Activated CD8-positive, alpha-beta T cell treated with anti-CD3 and anti-CD28 coated beads, Interleukin-2, amount 10 ng/mL, durations not matched to agents 7 days and 5 days (primary cell): ENCODE measurements at regions of chr5 and their contacts with region 1.

Region 1: DNA sequence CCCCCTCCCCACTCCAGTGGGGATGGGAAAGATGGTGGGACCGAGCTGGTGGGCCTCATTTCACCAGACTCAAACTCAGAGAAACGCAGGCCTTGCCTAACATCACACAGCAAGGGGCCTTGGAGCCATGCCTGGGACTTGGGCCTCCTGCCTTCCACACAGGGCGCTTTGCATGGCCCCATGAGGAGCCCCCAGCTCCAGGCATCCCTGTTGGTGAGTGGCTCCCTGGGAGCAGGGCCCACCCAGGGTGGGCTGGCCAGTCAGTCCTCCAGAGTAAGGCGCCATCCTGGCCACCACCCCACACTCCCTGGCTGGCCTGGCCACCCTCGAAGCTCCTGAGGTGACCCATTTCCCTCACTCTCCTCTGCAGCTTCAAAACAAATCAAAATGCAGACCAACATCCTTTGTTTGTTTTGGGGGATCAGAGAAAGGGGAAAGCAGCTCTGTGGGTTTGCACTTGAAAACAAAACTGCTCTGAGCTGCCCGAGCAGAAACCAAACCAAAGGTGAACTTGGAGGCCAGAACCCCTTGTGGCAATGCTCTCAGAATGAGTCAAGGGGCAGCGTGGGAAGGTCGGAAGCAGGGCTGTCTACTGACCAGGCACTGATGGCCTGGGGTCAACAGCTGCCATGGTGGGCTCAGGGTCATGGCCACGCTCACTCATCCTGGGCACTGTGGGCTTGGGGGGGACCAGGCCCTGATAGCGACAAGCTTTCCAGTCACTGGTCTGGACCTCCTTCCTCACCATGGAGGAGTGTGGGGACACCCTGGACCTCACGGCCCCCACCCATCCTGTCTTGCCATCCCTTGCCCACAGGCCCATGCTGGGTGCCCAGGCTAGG is 37.0 kb upstream of the VDAC1 start:
- DNase-seq: peak; percentile 43
- ATAC-seq: peak; percentile 24
- H3K4me3 Mint-ChIP-seq: no peak overlapping the region
- H3K27ac Mint-ChIP-seq: peak overlapping the region; percentile 39
- H3K4me1 Mint-ChIP-seq: peaks cover 42% of the 10 kb centered on the region
- H3K27me3 Mint-ChIP-seq: no peaks in the 10 kb centered on the region

Region 2: GRCh38 chr5:134004592-134005375 is 37.0 kb before region 1 on chr5 and contains the start of gene VDAC1:
- CTCF ChIA-PET with region 1: interaction called, 38 read pairs
- POLR2A ChIA-PET with region 1: interaction called, 4 read pairs
- DNase-seq: peak; percentile 92
- ATAC-seq: peak; percentile 83
- H3K4me3 Mint-ChIP-seq: peak within 1 kb of the TSS; percentile 92
- H3K27ac Mint-ChIP-seq: peak within 1 kb of the TSS; percentile 98
- H3K4me1 Mint-ChIP-seq: peaks cover 46% of the 10 kb centered on the region
- H3K27me3 Mint-ChIP-seq: no peaks in the 10 kb centered on the region
- total RNA-seq, gene VDAC1: 250 to 259 TPM

Region 3: GRCh38 chr5:134053840-134054338 is 12.1 kb after region 1 on chr5:
- CTCF ChIA-PET with region 1: interaction called, 77 read pairs
- POLR2A ChIA-PET with region 1: interaction called, 4 read pairs
- DNase-seq: no peak
- ATAC-seq: peak; percentile 83
- H3K4me3 Mint-ChIP-seq: peak overlapping the region; percentile 22
- H3K27ac Mint-ChIP-seq: peak overlapping the region; percentile 87
- H3K4me1 Mint-ChIP-seq: peaks cover 30% of the 10 kb centered on the region
- H3K27me3 Mint-ChIP-seq: no peaks in the 10 kb centered on the region

Region 4: DNA sequence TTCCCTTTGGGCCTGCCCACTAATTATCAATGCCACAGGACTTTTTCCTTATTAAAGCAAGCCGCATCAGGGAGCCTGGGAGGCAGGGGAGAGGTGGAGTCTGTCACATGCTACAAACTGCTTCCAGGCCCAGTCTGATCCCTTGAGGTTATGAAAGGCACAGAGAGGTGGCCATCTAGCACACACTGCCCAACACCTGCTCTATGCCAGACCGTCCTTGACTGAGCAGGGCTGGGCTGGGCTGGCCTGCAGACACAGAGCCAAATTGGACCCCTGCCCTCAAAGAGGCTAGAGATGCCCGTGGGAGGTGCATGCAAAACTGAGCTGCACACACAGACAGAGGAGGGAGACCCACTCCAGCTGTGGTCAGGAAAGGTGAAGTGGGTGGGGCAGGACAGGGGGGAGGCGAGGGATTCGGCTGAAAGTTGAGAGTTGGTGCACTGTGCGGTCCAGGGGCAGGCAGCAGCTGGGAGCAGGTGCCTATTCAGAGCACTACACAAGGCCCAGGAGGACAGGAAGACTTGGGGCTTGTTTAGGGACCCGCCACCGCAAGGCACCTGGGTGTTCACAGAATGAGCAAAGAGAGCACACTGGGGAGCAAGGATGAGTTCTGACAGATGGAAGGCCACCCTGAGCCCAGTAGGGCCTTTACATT is 36.3 kb after region 1 on chr5:
- CTCF ChIA-PET with region 1: interaction called, 71 read pairs
- POLR2A ChIA-PET with region 1: interaction called, 4 read pairs
- DNase-seq: no peak
- ATAC-seq: peak; percentile 35
- H3K4me3 Mint-ChIP-seq: no peak overlapping the region
- H3K27ac Mint-ChIP-seq: peak overlapping the region; percentile 82
- H3K4me1 Mint-ChIP-seq: peaks cover 56% of the 10 kb centered on the region
- H3K27me3 Mint-ChIP-seq: no peaks in the 10 kb centered on the region

Region 5: GRCh38 chr5:134119720-134120119 is 77.9 kb after region 1 on chr5:
- CTCF ChIA-PET with region 1: interaction called, 76 read pairs
- POLR2A ChIA-PET with region 1: interaction called, 14 read pairs
- DNase-seq: no peak
- ATAC-seq: no peak
- H3K4me3 Mint-ChIP-seq: peak overlapping the region; percentile 69
- H3K27ac Mint-ChIP-seq: peak overlapping the region; percentile 73
- H3K4me1 Mint-ChIP-seq: peaks cover 88% of the 10 kb centered on the region
- H3K27me3 Mint-ChIP-seq: peaks cover 2% of the 10 kb centered on the region

Region 6: GRCh38 chr5:134145779-134146581 is 104.2 kb after region 1 on chr5:
- CTCF ChIA-PET with region 1: interaction called, 618 read pairs
- POLR2A ChIA-PET with region 1: interaction called, 9 read pairs
- DNase-seq: peak; percentile 87
- ATAC-seq: peak; percentile 77
- H3K4me3 Mint-ChIP-seq: no peak overlapping the region
- H3K27ac Mint-ChIP-seq: no peak overlapping the region
- H3K4me1 Mint-ChIP-seq: peaks cover 31% of the 10 kb centered on the region
- H3K27me3 Mint-ChIP-seq: no peaks in the 10 kb centered on the region

Region 7: DNA sequence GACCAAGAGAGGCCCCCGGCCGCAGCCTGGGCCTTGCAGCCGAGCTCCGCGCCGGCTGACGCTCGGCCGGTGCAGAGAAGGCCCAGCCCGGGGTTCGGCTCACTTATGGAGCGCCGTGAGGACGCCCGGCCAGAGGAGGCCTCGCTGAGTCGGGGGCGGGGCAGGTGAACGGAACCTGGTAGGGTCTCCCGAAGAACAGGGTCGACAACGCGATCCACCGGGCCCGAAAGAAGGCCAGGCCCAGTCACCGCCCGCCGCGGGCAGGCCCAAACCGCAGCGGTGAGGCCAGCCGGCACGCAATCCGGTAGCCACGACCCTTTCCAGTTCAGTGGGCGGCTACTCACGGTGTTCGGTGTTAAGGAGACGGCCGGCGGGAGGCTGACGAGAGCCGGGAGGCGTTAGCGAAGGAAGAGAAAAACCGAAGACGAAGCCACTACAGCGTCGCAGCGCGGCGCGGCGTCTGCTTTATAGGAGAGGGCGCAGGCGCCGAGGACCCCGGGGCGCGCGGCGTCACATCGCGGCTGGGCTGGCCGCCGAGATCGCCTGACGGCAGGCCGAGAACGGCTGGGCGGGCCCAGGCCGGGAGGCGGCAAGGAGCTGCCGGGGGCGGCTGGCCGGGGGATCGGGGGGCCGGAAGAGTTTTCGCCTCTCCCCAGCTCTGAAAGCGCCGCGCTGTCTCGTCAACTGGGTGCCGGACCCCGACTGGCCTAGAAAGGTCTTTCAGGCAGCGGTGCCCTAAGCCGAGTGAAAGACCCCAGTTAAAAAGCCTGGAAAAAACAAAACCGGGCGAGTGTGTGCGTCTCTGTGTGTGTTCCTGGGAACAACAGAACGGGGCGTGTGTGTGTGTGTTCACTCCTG is 134.9 kb after region 1 on chr5 and contains the start of gene SKP1:
- CTCF ChIA-PET with region 1: interaction called, 17 read pairs
- POLR2A ChIA-PET with region 1: interaction called, 6 read pairs
- DNase-seq: peak; percentile 86
- ATAC-seq: peak; percentile 88
- H3K4me3 Mint-ChIP-seq: peak within 1 kb of the TSS; percentile 84
- H3K27ac Mint-ChIP-seq: peak within 1 kb of the TSS; percentile 98
- H3K4me1 Mint-ChIP-seq: peaks cover 28% of the 10 kb centered on the region
- H3K27me3 Mint-ChIP-seq: no peaks in the 10 kb centered on the region
- total RNA-seq, gene SKP1: 203 to 206 TPM

Region 8: GRCh38 chr5:134304311-134304710 is 262.5 kb after region 1 on chr5:
- CTCF ChIA-PET with region 1: no interaction called
- POLR2A ChIA-PET with region 1: no interaction called
- DNase-seq: no peak
- ATAC-seq: no peak
- H3K4me3 Mint-ChIP-seq: no peak overlapping the region
- H3K27ac Mint-ChIP-seq: no peak overlapping the region
- H3K4me1 Mint-ChIP-seq: peaks cover 7% of the 10 kb centered on the region
- H3K27me3 Mint-ChIP-seq: no peaks in the 10 kb centered on the region